ENCODE measurements at regions of chr9 and their contacts with region 1.

Region 1: DNA sequence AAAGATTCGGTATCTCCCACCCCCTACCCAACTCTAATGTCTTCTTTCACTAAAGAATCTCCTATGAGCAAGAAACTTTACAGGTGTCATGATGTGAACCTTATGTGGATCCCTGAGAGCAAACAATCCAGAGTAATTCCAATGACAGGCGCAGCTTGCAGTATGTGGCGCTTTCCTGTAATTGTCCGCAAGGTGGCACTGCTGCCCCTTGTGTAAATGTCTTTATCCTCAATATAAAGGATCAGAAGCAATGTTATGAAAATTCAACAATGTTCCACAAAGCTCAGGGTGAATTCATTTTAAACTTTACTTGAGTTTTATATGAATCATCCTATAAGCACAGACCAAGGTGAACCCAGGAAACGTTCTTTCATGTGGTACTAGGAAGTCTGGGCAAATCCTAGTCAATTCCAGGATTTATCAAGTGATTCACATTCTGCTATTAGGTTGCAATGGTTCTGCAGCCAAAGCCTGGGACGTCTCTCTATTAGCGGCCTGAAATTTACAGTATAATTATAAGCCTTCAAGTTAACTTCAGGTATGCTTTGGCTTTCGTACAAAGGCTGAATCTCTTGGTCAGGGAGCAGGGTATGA is 113.7 kb downstream of the TRPM6 start:
- DNase-seq: peak; percentile 78
- ATAC-seq: peak; percentile 42
- H3K4me3 Mint-ChIP-seq: no peak overlapping the region
- H3K27ac Mint-ChIP-seq: no peak overlapping the region
- H3K4me1 Mint-ChIP-seq: peaks cover 4% of the 10 kb centered on the region
- H3K27me3 Mint-ChIP-seq: no peaks in the 10 kb centered on the region; the same call in none of the 2 replicates
- CTCF ChIP-seq: peak; percentile 76

Region 2: DNA sequence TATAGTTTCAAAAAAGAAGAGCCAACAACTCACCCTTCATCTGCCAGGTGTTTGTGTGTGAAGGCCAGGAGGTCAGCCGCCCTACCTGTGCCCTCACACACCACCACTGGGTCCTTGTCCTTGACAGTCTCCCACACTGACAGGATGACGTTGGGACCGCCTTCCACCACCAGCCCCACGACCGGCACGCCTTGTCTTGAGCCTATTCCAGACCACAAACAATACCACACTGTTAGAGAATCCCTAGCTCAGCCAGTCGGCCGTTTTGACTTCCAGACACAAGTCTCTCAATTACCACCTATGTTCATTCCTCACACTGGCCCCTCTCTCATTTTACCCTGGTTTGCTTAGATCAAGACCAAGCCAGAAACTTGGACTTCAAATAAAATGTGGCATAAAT is 47.7 kb after region 1 on chr9:
- CTCF ChIA-PET with region 1: no interaction called
- POLR2A ChIA-PET with region 1: no interaction called
- DNase-seq: no peak
- ATAC-seq: no peak
- H3K4me3 Mint-ChIP-seq: no peak overlapping the region
- H3K27ac Mint-ChIP-seq: no peak overlapping the region
- H3K4me1 Mint-ChIP-seq: peaks cover 17% of the 10 kb centered on the region
- H3K27me3 Mint-ChIP-seq: no peaks in the 10 kb centered on the region
- CTCF ChIP-seq: no peak

Region 3: GRCh38 chr9:74887041-74887980 is 113.3 kb after region 1 on chr9 and contains the start of gene TRPM6:
- CTCF ChIA-PET with region 1: interaction called, 13 read pairs
- POLR2A ChIA-PET with region 1: no interaction called
- DNase-seq: peak; percentile 68
- ATAC-seq: peak; percentile 81
- H3K4me3 Mint-ChIP-seq: peak within 1 kb of the TSS; percentile 90
- H3K27ac Mint-ChIP-seq: no peak within 1 kb of the TSS
- H3K4me1 Mint-ChIP-seq: peaks cover 8% of the 10 kb centered on the region
- H3K27me3 Mint-ChIP-seq: peaks cover 13% of the 10 kb centered on the region
- CTCF ChIP-seq: no peak
- total RNA-seq, gene TRPM6: 0.66 to 1.4 TPM (median 0.78 TPM) in 3 replicates

Region 4: GRCh38 chr9:75027187-75028107 is 253.5 kb after region 1 on chr9:
- CTCF ChIA-PET with region 1: interaction called, 13 read pairs
- POLR2A ChIA-PET with region 1: no interaction called
- DNase-seq: peak; percentile 54
- ATAC-seq: peak; percentile 20
- H3K4me3 Mint-ChIP-seq: peak overlapping the region; percentile 91
- H3K27ac Mint-ChIP-seq: peak overlapping the region; percentile 96
- H3K4me1 Mint-ChIP-seq: peaks cover 25% of the 10 kb centered on the region
- H3K27me3 Mint-ChIP-seq: no peaks in the 10 kb centered on the region
- CTCF ChIP-seq: no peak

Measured in WTC11 (cell line).